ENCODE measurements at regions of chr4 and their contacts with region 1.

Region 1: GRCh38 chr4:52743444-52744019 is 7.7 kb downstream of the ERVMER34-1 start:
- DNase-seq: no peak
- ATAC-seq: no peak
- H3K4me3 ChIP-seq: no peak overlapping the region
- H3K4me3 Mint-ChIP-seq: no peak overlapping the region
- H3K27ac ChIP-seq: no peak overlapping the region
- H3K27ac Mint-ChIP-seq: no peak overlapping the region
- H3K4me1 ChIP-seq: no peaks in the 10 kb centered on the region
- H3K4me1 Mint-ChIP-seq: no peaks in the 10 kb centered on the region
- H3K27me3 ChIP-seq: no peaks in the 10 kb centered on the region
- H3K27me3 Mint-ChIP-seq: peaks cover 19% of the 10 kb centered on the region
- CTCF ChIP-seq: no peak

Region 2: DNA sequence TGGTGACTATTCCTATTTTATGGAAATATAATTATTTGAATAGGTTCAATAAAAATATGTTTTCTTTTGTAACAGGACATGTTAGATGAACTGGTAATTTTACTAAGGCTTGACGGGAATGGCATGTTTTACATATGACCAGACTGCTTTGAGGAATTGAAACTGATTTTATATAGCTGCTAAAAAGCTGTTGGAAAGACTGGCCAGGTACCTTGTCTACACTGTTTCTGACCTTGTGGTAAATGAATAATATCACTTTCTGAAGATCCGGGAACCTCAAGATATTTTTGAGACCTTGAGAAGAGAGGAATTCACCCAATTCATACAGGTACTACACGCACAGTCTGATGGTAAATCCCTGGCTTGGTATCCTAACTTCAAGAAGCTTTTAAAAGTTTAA is 42.3 kb before region 1 on chr4:
- CTCF ChIA-PET with region 1: no interaction called
- POLR2A ChIA-PET with region 1: no interaction called
- intact Hi-C with region 1: loop called in 1 of 2 experiments (anchors 5 kb)
- DNase-seq: no peak
- ATAC-seq: no peak
- H3K4me3 ChIP-seq: no peak overlapping the region
- H3K4me3 Mint-ChIP-seq: no peak overlapping the region
- H3K27ac ChIP-seq: no peak overlapping the region
- H3K27ac Mint-ChIP-seq: no peak overlapping the region
- H3K4me1 ChIP-seq: no peaks in the 10 kb centered on the region
- H3K4me1 Mint-ChIP-seq: peaks cover 3% of the 10 kb centered on the region
- H3K27me3 ChIP-seq: no peaks in the 10 kb centered on the region
- H3K27me3 Mint-ChIP-seq: peaks cover 10% of the 10 kb centered on the region
- CTCF ChIP-seq: no peak

Region 3: GRCh38 chr4:54015423-54016030 is 1272.0 kb after region 1 on chr4:
- CTCF ChIA-PET with region 1: no interaction called
- POLR2A ChIA-PET with region 1: no interaction called
- intact Hi-C with region 1: loop called in 1 of 2 experiments (anchors 5 kb)
- DNase-seq: no peak
- ATAC-seq: no peak
- H3K4me3 ChIP-seq: no peak overlapping the region
- H3K4me3 Mint-ChIP-seq: no peak overlapping the region
- H3K27ac ChIP-seq: no peak overlapping the region
- H3K27ac Mint-ChIP-seq: no peak overlapping the region
- H3K4me1 ChIP-seq: no peaks in the 10 kb centered on the region
- H3K4me1 Mint-ChIP-seq: peaks cover 33% of the 10 kb centered on the region
- H3K27me3 ChIP-seq: no peaks in the 10 kb centered on the region
- H3K27me3 Mint-ChIP-seq: no peaks in the 10 kb centered on the region
- CTCF ChIP-seq: no peak